ENCODE measurements at regions of chr4 and their contacts with region 1.

Region 1: DNA sequence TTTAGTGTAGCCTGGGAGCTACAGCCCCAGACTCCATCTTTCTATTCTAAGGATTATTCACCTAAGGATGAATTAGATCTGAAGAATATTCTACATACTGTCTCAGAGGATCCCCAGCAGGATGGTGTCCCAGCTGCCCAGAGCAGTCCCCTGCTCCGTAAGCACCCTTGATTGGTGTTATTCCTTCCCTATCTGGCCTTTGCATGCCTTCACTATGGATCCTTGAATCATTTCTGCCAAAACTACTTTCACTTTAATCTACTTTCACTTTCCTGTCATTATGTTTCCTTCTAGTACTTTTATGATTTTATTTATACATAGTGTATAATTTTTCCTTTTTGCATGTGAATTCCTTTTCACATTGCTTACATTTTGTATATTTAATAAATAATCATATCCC is 39.2 kb downstream of the ARHGAP24 start:
- DNase-seq: no peak
- H3K4me3 ChIP-seq: no peak overlapping the region
- CTCF ChIP-seq: no peak

Region 2: DNA sequence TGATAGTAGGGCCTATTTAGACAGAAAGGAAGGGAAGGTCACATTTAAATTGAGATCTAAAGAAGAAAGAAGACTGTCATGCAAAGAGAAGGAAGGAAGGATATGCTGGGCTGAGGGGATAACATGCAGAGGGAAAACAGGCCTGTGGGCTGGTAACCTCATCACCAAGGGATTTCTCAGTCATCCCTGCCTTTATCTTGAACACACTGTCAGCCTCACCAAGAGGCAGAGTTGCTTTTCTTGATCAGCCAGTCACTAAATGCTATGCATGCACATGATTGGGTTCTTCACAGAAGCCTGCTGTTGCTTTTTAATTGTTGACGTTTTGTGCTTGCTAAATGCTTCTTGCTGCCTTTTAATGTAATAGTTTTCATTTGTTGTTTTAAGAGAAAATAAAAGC is 73.8 kb after region 1 on chr4:
- in situ Hi-C with region 1: loop called (anchors 5 kb)
- DNase-seq: no peak
- H3K4me3 ChIP-seq: no peak overlapping the region
- CTCF ChIP-seq: no peak

Measured in astrocyte of the cerebellum (primary cell).